ENCODE measurements at regions of chr6 and their contacts with region 1.

Region 1: DNA sequence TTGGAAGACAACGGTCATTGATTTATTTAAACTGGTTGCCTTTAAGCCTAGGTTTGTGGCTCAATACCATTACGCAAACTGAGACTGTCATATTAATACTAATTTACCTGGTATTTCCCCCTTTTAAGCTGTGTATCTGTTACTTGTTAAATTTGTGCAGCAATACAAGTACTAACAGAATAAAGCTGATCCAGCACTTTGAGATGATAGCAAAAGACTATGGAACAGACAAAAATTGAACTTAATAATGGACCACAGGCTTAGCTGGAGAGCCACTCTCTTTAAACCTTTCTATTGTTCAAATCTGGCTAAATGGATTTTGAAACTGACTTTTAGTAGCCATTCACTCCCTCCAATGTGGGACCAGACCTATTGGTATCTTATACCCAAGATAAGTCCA is 6.2 kb upstream of the CENPW start:
- DNase-seq: no peak
- ATAC-seq: no peak
- H3K4me3 ChIP-seq: no peak overlapping the region
- H3K4me3 Mint-ChIP-seq: no peak overlapping the region
- H3K27ac ChIP-seq: no peak overlapping the region
- H3K27ac Mint-ChIP-seq: no peak overlapping the region
- H3K4me1 ChIP-seq: no peaks in the 10 kb centered on the region
- H3K4me1 Mint-ChIP-seq: no peaks in the 10 kb centered on the region
- H3K27me3 ChIP-seq: no peaks in the 10 kb centered on the region
- H3K27me3 Mint-ChIP-seq: no peaks in the 10 kb centered on the region
- CTCF ChIP-seq: no peak

Region 2: GRCh38 chr6:126280287-126280686 is 53.4 kb before region 1 on chr6:
- CTCF ChIA-PET with region 1: no interaction called
- POLR2A ChIA-PET with region 1: no interaction called
- intact Hi-C with region 1: no loop called
- DNase-seq: no peak
- ATAC-seq: no peak
- H3K4me3 ChIP-seq: no peak overlapping the region
- H3K4me3 Mint-ChIP-seq: no peak overlapping the region
- H3K27ac ChIP-seq: no peak overlapping the region
- H3K27ac Mint-ChIP-seq: no peak overlapping the region
- H3K4me1 ChIP-seq: no peaks in the 10 kb centered on the region
- H3K4me1 Mint-ChIP-seq: no peaks in the 10 kb centered on the region
- H3K27me3 ChIP-seq: no peaks in the 10 kb centered on the region
- H3K27me3 Mint-ChIP-seq: no peaks in the 10 kb centered on the region
- CTCF ChIP-seq: no peak

Region 3: GRCh38 chr6:126784161-126784790 is 450.5 kb after region 1 on chr6:
- CTCF ChIA-PET with region 1: no interaction called
- POLR2A ChIA-PET with region 1: no interaction called
- intact Hi-C with region 1: loop called (anchors 5 kb)
- DNase-seq: no peak
- ATAC-seq: no peak
- H3K4me3 ChIP-seq: no peak overlapping the region
- H3K4me3 Mint-ChIP-seq: no peak overlapping the region
- H3K27ac ChIP-seq: no peak overlapping the region
- H3K27ac Mint-ChIP-seq: no peak overlapping the region
- H3K4me1 ChIP-seq: no peaks in the 10 kb centered on the region
- H3K4me1 Mint-ChIP-seq: no peaks in the 10 kb centered on the region
- H3K27me3 ChIP-seq: no peaks in the 10 kb centered on the region
- H3K27me3 Mint-ChIP-seq: peaks cover 4% of the 10 kb centered on the region
- CTCF ChIP-seq: no peak